WTC11 (cell line): ENCODE measurements at regions of chr12 and their contacts with region 1.

Region 1: GRCh38 chr12:6965026-6965661 is 5.3 kb downstream of the PHB2 start:
- DNase-seq: peak; percentile 85
- ATAC-seq: peak; percentile 25
- H3K4me3 Mint-ChIP-seq: peak overlapping the region; percentile 75
- H3K27ac Mint-ChIP-seq: peak overlapping the region; percentile 95
- H3K4me1 Mint-ChIP-seq: peaks cover 60% of the 10 kb centered on the region
- H3K27me3 Mint-ChIP-seq: no peaks in the 10 kb centered on the region
- CTCF ChIP-seq: peak; percentile 71

Region 2: DNA sequence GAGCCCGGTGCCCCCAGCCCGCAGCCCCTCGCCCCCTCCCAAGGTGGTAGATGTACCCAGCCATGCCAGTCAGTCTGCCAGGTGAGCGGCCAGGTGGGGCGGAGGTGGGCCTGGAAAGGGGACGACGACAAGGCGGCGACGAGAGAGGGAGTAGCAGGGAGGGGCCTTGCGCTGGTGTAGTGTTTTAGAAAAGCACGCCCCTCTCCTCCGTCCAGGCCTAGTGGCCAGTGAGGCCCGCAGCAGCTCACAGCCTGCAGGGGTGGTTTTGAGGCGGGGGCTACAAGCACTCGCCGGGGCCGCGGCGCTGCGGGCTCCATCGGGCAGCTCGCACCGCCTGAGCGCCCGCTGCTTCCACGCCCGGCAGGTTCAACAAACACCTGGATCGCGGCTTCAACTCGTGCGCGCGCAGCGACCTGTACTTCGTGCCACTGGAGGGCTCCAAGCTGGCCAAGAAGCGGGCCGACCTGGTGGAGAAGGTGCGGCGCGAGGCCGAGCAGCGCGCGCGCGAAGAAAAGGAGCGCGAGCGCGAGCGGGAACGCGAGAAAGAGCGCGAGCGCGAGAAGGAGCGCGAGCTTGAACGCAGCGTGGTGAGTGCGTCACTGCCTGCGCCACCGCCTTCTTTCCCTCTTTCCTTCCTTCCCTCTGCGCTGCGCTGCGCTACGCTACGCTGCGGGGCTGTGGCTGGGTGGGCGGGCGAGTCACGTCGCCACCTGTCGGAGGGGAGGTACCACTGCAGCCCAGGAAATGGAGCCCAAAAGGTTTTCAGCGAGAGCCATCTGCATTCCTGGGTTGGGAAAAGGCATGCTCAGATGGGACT is 27.5 kb before region 1 on chr12:
- CTCF ChIA-PET with region 1: interaction called, 296 read pairs
- POLR2A ChIA-PET with region 1: interaction called, 167 read pairs
- DNase-seq: peak; percentile 94
- ATAC-seq: peak; percentile 83
- H3K4me3 Mint-ChIP-seq: peak overlapping the region; percentile 69
- H3K27ac Mint-ChIP-seq: peak overlapping the region; percentile 93
- H3K4me1 Mint-ChIP-seq: peaks cover 29% of the 10 kb centered on the region
- H3K27me3 Mint-ChIP-seq: no peaks in the 10 kb centered on the region
- CTCF ChIP-seq: peak; percentile 92

Region 3: GRCh38 chr12:6953442-6954315 is 11.5 kb before region 1 on chr12:
- CTCF ChIA-PET with region 1: interaction called, 12 read pairs
- POLR2A ChIA-PET with region 1: no interaction called
- DNase-seq: no peak
- ATAC-seq: no peak; the same call in 1 of the 2 replicates
- H3K4me3 Mint-ChIP-seq: no peak overlapping the region
- H3K27ac Mint-ChIP-seq: peak overlapping the region; percentile 36
- H3K4me1 Mint-ChIP-seq: peaks cover 23% of the 10 kb centered on the region
- H3K27me3 Mint-ChIP-seq: no peaks in the 10 kb centered on the region
- CTCF ChIP-seq: no peak

Region 4: DNA sequence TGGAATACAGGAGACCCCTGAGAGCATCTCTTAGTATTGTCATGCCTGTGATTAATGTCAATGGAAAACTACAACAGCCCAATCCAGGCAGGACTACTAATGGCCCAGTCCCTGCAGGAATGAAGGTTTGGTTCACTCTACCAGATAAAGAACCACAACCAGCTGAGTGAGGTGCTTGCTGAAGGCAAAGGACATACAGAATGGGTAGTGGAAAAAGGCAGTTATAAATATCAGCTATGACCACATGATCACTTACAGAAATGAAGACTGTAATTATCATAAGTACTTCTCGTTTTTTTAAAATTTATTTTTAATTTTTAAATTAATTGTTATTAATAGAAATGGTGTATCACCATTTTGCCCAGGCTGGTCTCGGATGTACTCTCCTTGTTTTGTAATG is 70.3 kb after region 1 on chr12:
- CTCF ChIA-PET with region 1: no interaction called
- POLR2A ChIA-PET with region 1: no interaction called
- DNase-seq: no peak
- ATAC-seq: no peak
- H3K4me3 Mint-ChIP-seq: no peak overlapping the region
- H3K27ac Mint-ChIP-seq: no peak overlapping the region
- H3K4me1 Mint-ChIP-seq: peaks cover 22% of the 10 kb centered on the region
- H3K27me3 Mint-ChIP-seq: no peaks in the 10 kb centered on the region; the same call in 1 of the 2 replicates
- CTCF ChIP-seq: no peak